Activated T-helper 2 cell treated with anti-CD3 and anti-CD28 coated beads, Interferon-gamma antibody, Interleukin-2, Interleukin-4, amounts not matched to agents 10 μg/mL and 5 μg/mL and 100 μg/mL, durations not matched to agents 14 hours and 24 hours and 36 hours (primary cell): ENCODE measurements at regions of chr17 and their contacts with region 1.

Region 1: GRCh38 chr17:55527540-55528118 is 16.4 kb upstream of the SMIM36 start:
- DNase-seq: no peak
- H3K4me3 Mint-ChIP-seq: no peak overlapping the region
- H3K27ac Mint-ChIP-seq: no peak overlapping the region
- H3K4me1 Mint-ChIP-seq: peaks cover 15% of the 10 kb centered on the region
- H3K27me3 Mint-ChIP-seq: peaks cover 16% of the 10 kb centered on the region

Region 2: GRCh38 chr17:55576996-55577586 is 49.5 kb after region 1 on chr17:
- intact Hi-C with region 1: loop called (anchors 10 kb)
- DNase-seq: peak; percentile 23
- H3K4me3 Mint-ChIP-seq: no peak overlapping the region
- H3K27ac Mint-ChIP-seq: no peak overlapping the region
- H3K4me1 Mint-ChIP-seq: no peaks in the 10 kb centered on the region
- H3K27me3 Mint-ChIP-seq: peaks cover 29% of the 10 kb centered on the region

Region 3: GRCh38 chr17:55601874-55602364 is 74.3 kb after region 1 on chr17:
- intact Hi-C with region 1: loop called (anchors 1 kb)
- DNase-seq: no peak
- H3K4me3 Mint-ChIP-seq: no peak overlapping the region
- H3K27ac Mint-ChIP-seq: no peak overlapping the region
- H3K4me1 Mint-ChIP-seq: no peaks in the 10 kb centered on the region
- H3K27me3 Mint-ChIP-seq: peaks cover 2% of the 10 kb centered on the region

Region 4: DNA sequence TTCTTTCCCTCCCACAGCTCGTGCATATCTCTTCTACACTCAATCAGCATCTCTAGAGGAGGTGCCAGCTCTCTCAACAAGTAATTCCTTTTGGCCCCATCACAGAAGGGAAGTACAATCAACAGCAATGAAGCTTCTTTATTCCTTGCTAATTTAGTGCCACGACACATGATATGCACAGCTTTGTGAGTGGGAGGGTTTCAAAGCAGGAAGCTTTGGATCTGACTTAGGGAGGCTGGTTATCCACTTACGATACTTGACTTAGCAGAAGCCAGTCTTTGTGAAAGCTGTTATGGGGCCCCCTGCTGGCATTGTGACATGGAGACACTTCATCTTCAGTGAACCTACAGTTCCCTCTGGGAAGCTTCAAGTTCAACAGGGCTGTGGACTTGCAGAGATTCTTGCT is 114.0 kb after region 1 on chr17:
- intact Hi-C with region 1: loop called (anchors 2 kb)
- DNase-seq: no peak
- H3K4me3 Mint-ChIP-seq: no peak overlapping the region
- H3K27ac Mint-ChIP-seq: no peak overlapping the region
- H3K4me1 Mint-ChIP-seq: peaks cover 8% of the 10 kb centered on the region
- H3K27me3 Mint-ChIP-seq: peaks cover 17% of the 10 kb centered on the region

Region 5: DNA sequence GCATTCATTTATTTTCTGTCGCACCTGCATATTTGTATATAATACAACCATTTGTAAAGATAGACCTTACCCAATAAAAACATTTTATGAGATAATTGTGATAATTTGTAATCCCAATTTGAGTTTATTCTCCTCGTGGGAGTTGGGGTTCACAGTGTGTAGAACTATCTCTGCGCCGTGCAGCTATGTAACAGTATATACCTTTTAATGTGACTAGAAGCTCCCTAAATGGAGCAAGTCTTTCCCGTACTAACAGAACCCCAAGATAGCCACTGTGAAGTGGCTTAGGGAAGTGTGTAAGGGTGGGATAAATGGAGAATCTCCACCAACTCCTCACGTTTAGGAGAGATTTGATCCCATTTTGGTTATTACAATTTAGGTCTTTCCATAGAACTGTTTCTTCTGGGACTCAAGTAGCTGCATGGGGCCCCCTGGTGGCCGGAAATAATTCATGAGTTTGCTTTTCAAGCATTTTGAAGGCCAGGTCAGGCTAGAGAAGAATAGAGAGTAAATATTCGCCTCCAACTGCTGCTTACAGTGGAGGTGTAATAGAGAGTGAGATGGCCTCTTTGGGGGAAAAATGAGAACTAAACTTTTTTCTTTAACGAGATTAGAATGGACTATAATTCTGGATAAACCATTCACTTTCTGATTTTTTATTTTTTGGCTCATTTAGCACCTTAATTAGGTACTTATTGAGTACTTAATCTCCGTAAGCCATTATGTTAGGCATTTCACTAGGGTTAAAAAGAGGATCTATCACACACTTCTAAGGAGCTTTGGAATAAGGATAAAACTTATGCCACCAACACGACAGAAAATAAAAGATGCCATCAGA is 190.5 kb after region 1 on chr17:
- intact Hi-C with region 1: loop called (anchors 2 kb)
- DNase-seq: peak; percentile 40
- H3K4me3 Mint-ChIP-seq: no peak overlapping the region
- H3K27ac Mint-ChIP-seq: no peak overlapping the region
- H3K4me1 Mint-ChIP-seq: peaks cover 2% of the 10 kb centered on the region
- H3K27me3 Mint-ChIP-seq: peaks cover 26% of the 10 kb centered on the region

Region 6: GRCh38 chr17:55735731-55736405 is 208.2 kb after region 1 on chr17:
- intact Hi-C with region 1: loop called (anchors 5 kb)
- DNase-seq: peak; percentile 13
- H3K4me3 Mint-ChIP-seq: no peak overlapping the region
- H3K27ac Mint-ChIP-seq: no peak overlapping the region
- H3K4me1 Mint-ChIP-seq: peaks cover 35% of the 10 kb centered on the region
- H3K27me3 Mint-ChIP-seq: peaks cover 37% of the 10 kb centered on the region

Region 7: GRCh38 chr17:55770148-55770870 is 242.7 kb after region 1 on chr17:
- intact Hi-C with region 1: loop called (anchors 1 kb)
- DNase-seq: no peak
- H3K4me3 Mint-ChIP-seq: no peak overlapping the region
- H3K27ac Mint-ChIP-seq: no peak overlapping the region
- H3K4me1 Mint-ChIP-seq: no peaks in the 10 kb centered on the region
- H3K27me3 Mint-ChIP-seq: no peaks in the 10 kb centered on the region